PC-9 (cell line): ENCODE measurements at regions of chr17 and their contacts with region 1.

Region 1: GRCh38 chr17:75191584-75191983 is 8.8 kb upstream of the SUMO2 start:
- DNase-seq: no peak
- H3K4me3 ChIP-seq: no peak overlapping the region
- H3K27ac ChIP-seq: no peak overlapping the region
- H3K4me1 ChIP-seq: peaks cover 15% of the 10 kb centered on the region
- H3K27me3 ChIP-seq: no peaks in the 10 kb centered on the region
- CTCF ChIP-seq: no peak

Region 2: DNA sequence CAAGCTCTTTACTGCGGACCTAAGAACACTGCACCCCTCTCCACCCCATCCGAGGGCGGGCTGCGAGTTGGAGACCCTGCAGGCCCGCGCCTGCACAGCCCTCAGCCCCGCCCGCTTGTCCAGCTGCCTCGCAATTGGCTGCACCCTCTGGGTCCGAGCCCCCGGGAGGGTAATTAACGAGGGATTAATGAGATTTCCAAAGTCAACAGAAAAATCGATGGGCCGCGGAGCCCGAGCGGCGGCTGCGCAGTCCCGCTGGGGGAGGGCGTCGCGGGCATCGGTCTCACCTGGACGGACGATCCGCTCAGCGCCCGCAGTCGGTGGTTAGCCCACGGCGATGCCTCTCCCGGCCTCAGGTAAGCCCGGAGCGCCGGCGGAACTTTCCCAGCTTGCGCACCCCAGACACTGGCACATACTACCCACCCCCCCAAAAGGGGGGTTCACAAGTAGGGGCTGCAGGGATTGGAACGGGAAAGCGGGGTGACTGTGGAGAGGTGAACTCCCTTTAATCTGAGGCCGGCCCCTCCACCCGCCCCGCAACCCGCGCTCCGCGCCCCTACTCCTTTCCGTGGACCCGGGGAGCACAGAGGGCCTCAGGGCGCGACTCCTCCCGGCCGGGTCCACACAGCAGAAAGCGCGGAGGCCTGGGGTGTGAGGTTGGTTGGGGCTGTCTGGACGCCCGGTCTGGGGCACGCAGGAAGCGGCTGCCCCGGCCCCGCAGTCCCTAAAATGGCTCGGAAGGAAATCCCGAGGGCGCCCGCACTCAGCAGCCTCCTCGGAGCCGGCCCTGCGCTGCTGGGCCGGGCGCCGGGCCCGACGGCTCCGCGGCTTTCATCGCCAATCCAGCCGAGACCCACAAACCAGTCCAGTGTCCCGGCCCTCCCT is 255.8 kb before region 1 on chr17 and contains the start of gene OTOP3:
- CTCF ChIA-PET with region 1: no interaction called
- POLR2A ChIA-PET with region 1: interaction called, 10 read pairs
- intact Hi-C with region 1: no loop called
- DNase-seq: no peak
- H3K4me3 ChIP-seq: no peak within 1 kb of the TSS
- H3K27ac ChIP-seq: no peak within 1 kb of the TSS
- H3K4me1 ChIP-seq: no peaks in the 10 kb centered on the region
- H3K27me3 ChIP-seq: peaks cover 46% of the 10 kb centered on the region
- CTCF ChIP-seq: no peak
- total RNA-seq, gene OTOP3: not detected in 2 replicates

Region 3: DNA sequence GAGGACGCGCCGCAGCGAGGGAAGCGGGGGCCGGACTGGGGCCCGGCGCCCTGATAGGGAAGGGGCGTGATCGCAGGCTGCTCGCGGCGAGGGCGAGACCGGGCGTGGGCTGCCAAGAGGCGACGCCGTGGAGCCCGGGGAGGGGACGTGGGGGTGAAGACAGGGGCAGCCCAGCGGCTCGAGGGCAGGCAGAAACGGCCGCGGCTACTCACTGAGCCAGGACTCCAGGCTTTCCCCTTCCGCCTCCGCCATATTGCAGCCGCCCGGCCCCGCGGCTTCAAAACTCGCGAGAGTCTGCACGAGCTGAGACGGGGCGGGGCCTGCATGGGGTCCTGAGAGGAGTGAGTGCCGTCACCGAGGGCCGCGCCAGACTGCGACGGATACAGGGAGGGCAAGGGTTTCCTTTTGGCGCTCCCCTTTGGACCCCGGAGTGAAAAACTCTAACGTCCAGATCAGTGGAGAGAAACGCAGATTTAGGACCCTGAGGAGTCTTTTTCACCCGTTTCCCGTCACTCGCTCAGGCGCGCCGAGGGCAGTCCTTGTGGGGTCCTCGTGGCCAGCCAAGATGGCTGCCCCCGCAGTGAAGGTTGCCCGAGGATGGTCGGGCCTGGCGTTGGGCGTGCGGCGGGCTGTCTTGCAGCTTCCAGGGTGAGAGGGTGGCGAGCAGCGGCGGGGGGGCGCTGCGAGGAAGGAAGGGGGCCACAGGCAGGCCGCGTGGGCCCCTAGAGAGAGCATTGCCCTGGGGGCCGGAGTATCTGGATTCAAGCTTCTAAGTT is 69.9 kb after region 1 on chr17 and contains the starts of genes GGA3 and MRPS7:
- CTCF ChIA-PET with region 1: no interaction called
- POLR2A ChIA-PET with region 1: no interaction called
- intact Hi-C with region 1: no loop called
- DNase-seq: peak; percentile 80 to 93
- H3K4me3 ChIP-seq: peak within 1 kb of the TSS; percentile 86
- H3K27ac ChIP-seq: peak within 1 kb of the TSS; percentile 88
- H3K4me1 ChIP-seq: peaks cover 21% of the 10 kb centered on the region
- H3K27me3 ChIP-seq: no peaks in the 10 kb centered on the region
- CTCF ChIP-seq: no peak
- total RNA-seq, gene GGA3: 34.8 and 37.5 TPM in 2 replicates
- total RNA-seq, gene MRPS7: 50.1 and 51.3 TPM in 2 replicates